ENCODE measurements at regions of chr9 and their contacts with region 1.

Region 1: GRCh38 chr9:127785023-127785932 is 556 bp upstream of the CDK9 start:
- DNase-seq: peak; percentile 87 to 91
- H3K4me3 ChIP-seq: peak overlapping the region; percentile 94
- H3K4me3 Mint-ChIP-seq: peak overlapping the region; percentile 98
- H3K27ac Mint-ChIP-seq: peak overlapping the region; percentile 71
- H3K4me1 ChIP-seq: no peaks in the 10 kb centered on the region
- H3K4me1 Mint-ChIP-seq: no peaks in the 10 kb centered on the region
- H3K27me3 ChIP-seq: no peaks in the 10 kb centered on the region
- H3K27me3 Mint-ChIP-seq: no peaks in the 10 kb centered on the region
- CTCF ChIP-seq: peak; percentile 91 to 92

Region 2: GRCh38 chr9:127503947-127504782 is 281.1 kb before region 1 on chr9:
- CTCF ChIA-PET with region 1: no interaction called
- POLR2A ChIA-PET with region 1: no interaction called
- intact Hi-C with region 1: loop called (anchors 10 kb)
- DNase-seq: peak; percentile 87
- H3K4me3 ChIP-seq: no peak overlapping the region
- H3K4me3 Mint-ChIP-seq: no peak overlapping the region
- H3K27ac Mint-ChIP-seq: no peak overlapping the region
- H3K4me1 ChIP-seq: no peaks in the 10 kb centered on the region
- H3K4me1 Mint-ChIP-seq: no peaks in the 10 kb centered on the region
- H3K27me3 ChIP-seq: no peaks in the 10 kb centered on the region
- H3K27me3 Mint-ChIP-seq: no peaks in the 10 kb centered on the region
- CTCF ChIP-seq: peak; percentile 90 to 94

Region 3: GRCh38 chr9:127758843-127759242 is 26.4 kb before region 1 on chr9:
- CTCF ChIA-PET with region 1: no interaction called
- POLR2A ChIA-PET with region 1: no interaction called
- intact Hi-C with region 1: no loop called
- DNase-seq: no peak
- H3K4me3 ChIP-seq: no peak overlapping the region
- H3K4me3 Mint-ChIP-seq: no peak overlapping the region
- H3K27ac Mint-ChIP-seq: no peak overlapping the region
- H3K4me1 ChIP-seq: 0 out of 2 replicates have a peak, but pooled peaks cover 3% of the 10 kb centered on the region
- H3K4me1 Mint-ChIP-seq: no peaks in the 10 kb centered on the region
- H3K27me3 ChIP-seq: peaks cover 2% of the 10 kb centered on the region
- H3K27me3 Mint-ChIP-seq: peaks cover 16% of the 10 kb centered on the region
- CTCF ChIP-seq: no peak

Region 4: DNA sequence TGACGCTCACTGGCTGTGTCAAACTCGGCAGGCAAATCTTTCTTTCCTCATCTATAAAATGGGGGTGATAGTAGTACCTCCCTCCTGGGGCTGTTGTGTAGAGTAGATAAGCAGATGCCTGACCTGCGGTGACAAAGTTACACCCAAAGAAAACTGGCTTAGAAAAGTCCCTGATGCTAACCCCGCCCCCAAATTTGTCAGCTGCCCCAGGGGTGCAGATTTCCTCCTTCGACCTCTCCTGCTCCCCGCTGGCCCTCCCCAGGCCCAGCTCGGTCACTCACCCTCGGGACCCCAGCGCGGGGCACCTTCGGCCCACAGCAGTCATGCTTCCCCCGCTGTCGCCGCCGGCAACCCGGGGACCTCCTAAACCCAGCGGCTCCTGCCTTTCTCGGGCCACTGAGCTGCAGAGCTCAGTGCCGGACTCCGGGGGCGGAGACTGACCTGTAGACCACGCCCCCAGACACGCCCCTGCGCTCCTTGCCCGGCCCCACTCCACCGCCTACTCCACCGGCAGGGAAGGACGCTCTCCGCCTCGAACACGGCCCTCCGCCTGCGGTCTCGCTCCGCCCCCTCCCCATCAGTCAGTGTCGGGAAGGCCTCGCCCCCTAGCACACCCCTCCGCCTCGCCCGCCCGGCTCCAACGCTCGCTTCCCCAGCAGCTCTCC is 14.2 kb before region 1 on chr9:
- CTCF ChIA-PET with region 1: interaction called, 7 read pairs
- POLR2A ChIA-PET with region 1: interaction called, 8 read pairs
- intact Hi-C with region 1: loop called (anchors 1 kb)
- DNase-seq: peak; percentile 99
- H3K4me3 ChIP-seq: peak overlapping the region; percentile 48
- H3K4me3 Mint-ChIP-seq: peak overlapping the region; percentile 82
- H3K27ac Mint-ChIP-seq: no peak overlapping the region
- H3K4me1 ChIP-seq: no peaks in the 10 kb centered on the region
- H3K4me1 Mint-ChIP-seq: no peaks in the 10 kb centered on the region
- H3K27me3 ChIP-seq: no peaks in the 10 kb centered on the region
- H3K27me3 Mint-ChIP-seq: peaks cover 3% of the 10 kb centered on the region
- CTCF ChIP-seq: no peak

Region 5: GRCh38 chr9:127869310-127870152 is 84.3 kb after region 1 on chr9:
- CTCF ChIA-PET with region 1: interaction called, 6 read pairs
- POLR2A ChIA-PET with region 1: no interaction called
- intact Hi-C with region 1: loop called (anchors 1 kb)
- DNase-seq: peak; percentile 88 to 93
- H3K4me3 ChIP-seq: no peak overlapping the region
- H3K4me3 Mint-ChIP-seq: no peak overlapping the region
- H3K27ac Mint-ChIP-seq: no peak overlapping the region
- H3K4me1 ChIP-seq: no peaks in the 10 kb centered on the region
- H3K4me1 Mint-ChIP-seq: peaks cover 11% of the 10 kb centered on the region
- H3K27me3 ChIP-seq: no peaks in the 10 kb centered on the region
- H3K27me3 Mint-ChIP-seq: no peaks in the 10 kb centered on the region
- CTCF ChIP-seq: peak; percentile 94 to 95

Region 6: DNA sequence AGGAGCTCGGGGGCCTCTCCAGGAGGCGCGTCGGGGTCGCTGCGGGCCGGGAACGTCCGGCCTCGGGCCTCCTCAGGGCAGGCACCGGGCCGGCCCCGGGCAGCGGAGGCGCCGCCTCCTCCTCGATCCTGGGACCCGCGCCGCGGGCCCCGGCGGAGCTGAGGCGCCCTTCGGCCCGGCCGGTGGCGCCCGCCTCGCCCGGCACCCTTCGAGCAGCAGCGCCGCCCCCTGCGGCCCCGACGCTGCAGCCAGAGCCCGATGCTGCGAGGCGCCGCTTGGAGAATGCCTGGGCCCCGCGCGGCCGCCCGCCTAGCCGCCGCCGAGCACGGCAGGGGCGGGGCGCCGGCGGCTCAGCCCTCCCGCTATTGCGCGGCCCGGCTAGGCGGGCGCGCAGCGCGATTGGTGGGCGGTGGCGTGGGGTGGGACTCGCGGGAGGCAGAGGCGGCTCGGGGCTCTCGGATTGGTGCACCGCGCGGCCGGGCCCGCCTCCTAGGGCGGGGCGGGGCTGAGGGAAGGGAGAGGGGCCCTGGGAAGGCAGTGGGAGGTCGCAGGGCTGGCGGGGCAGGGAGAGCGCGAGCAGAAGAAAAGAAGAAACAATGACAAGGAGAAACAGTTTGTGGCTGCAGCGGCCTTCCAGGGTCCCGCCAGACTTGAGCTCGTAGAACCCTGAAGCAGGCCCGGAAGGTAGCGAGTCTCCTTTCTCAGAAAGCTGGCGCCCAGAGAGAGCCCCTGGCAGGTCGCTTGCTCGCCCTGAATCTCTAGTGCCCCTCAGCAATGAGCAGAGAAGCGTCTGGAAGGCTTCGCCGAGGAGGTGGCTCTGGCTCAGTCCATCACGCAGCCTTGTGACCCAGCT is 195.7 kb after region 1 on chr9 and contains the start of gene EEIG1:
- CTCF ChIA-PET with region 1: interaction called, 11 read pairs
- POLR2A ChIA-PET with region 1: no interaction called
- intact Hi-C with region 1: no loop called
- DNase-seq: peak; percentile 96 to 98
- H3K4me3 ChIP-seq: peak within 1 kb of the TSS; percentile 87
- H3K4me3 Mint-ChIP-seq: peak within 1 kb of the TSS; percentile 95
- H3K27ac Mint-ChIP-seq: peak within 1 kb of the TSS; percentile 86
- H3K4me1 ChIP-seq: peaks cover 33% of the 10 kb centered on the region
- H3K4me1 Mint-ChIP-seq: peaks cover 16% of the 10 kb centered on the region
- H3K27me3 ChIP-seq: no peaks in the 10 kb centered on the region
- H3K27me3 Mint-ChIP-seq: no peaks in the 10 kb centered on the region
- CTCF ChIP-seq: no peak
- total RNA-seq, gene EEIG1: 44.1 and 47.1 TPM in 2 replicates

Measured in Caco-2 (cell line).